Calu3 (cell line): ENCODE measurements at regions of chr6 and their contacts with region 1.

Region 1: GRCh38 chr6:13914351-13914750 is 10.4 kb upstream of the RNF182 start:
- DNase-seq: no peak
- H3K4me3 Mint-ChIP-seq: no peak overlapping the region
- H3K27ac Mint-ChIP-seq: no peak overlapping the region
- H3K4me1 Mint-ChIP-seq: peaks cover 12% of the 10 kb centered on the region
- H3K27me3 Mint-ChIP-seq: peaks cover 31% of the 10 kb centered on the region
- CTCF ChIP-seq: no peak

Region 2: DNA sequence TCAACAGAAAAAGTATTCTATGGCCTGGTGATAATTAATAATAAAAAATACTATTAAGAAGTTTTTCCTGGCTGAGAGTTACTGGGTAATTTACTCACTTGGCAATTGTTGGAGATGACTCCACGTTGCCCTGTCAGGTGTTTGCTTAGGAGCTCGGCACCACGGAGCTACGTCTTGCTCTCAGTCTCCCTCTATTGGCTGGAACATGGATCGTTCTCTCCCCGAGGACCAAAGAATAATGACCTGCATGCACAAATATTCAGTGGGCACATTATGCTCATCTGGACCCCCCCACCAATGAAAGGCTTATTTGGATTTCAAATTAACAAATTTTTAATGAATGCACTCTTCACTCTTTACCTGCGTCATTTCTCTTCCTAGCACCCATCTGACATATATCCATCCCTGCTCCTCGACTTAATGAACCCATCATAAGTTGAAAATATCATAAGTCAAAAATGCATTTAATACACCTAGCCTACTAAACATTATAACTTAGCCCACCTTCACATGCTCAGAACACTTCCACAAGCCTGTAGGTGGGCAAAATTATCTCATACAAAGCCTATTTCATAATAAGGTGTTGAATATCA is 132.2 kb after region 1 on chr6:
- CTCF ChIA-PET with region 1: interaction called, 20 read pairs
- intact Hi-C with region 1: loop called (anchors 5 kb)
- DNase-seq: peak; percentile 39
- H3K4me3 Mint-ChIP-seq: no peak overlapping the region
- H3K27ac Mint-ChIP-seq: no peak overlapping the region
- H3K4me1 Mint-ChIP-seq: no peaks in the 10 kb centered on the region
- H3K27me3 Mint-ChIP-seq: peaks cover 30% of the 10 kb centered on the region
- CTCF ChIP-seq: no peak

Region 3: GRCh38 chr6:14254505-14254904 is 340.2 kb after region 1 on chr6:
- CTCF ChIA-PET with region 1: no interaction called
- intact Hi-C with region 1: no loop called
- DNase-seq: no peak
- H3K4me3 Mint-ChIP-seq: no peak overlapping the region
- H3K27ac Mint-ChIP-seq: no peak overlapping the region
- H3K4me1 Mint-ChIP-seq: no peaks in the 10 kb centered on the region
- H3K27me3 Mint-ChIP-seq: no peaks in the 10 kb centered on the region
- CTCF ChIP-seq: no peak